Mammary epithelial cell (primary cell): ENCODE measurements at regions of chr12 and their contacts with region 1.

Region 1: DNA sequence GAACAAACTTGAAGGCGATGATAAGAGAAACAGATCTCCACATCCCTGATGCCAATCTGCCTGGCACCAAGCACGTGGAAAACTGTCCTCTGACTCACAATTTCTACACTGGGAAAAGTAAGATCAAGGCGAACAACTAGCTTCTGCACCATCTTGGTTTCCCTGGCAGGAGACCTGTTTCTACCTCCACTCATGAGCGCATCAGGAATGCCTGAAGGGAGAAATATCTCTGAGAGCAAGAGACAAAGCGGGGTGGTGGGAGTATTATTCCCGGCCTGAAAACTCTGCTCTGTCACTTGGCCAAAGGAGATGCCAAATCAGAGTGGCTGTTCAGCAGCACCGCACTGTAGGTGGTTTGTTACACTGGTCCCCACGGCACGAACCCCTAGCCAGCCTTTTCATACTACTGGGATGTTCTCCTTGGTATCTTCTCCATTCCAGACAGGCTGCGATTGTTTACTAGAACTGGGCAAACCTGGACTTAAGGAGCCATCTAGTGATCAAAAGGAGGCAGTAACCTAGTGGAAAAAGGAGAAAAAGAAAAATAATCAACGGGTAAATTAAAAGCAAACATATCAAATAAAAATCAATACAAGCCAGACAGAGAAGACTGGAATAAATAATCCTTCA is 59.0 kb upstream of the TMTC2 start:
- DNase-seq: peak; percentile 30
- H3K4me3 ChIP-seq: no peak overlapping the region
- H3K27ac ChIP-seq: no peak overlapping the region
- H3K4me1 ChIP-seq: no peaks in the 10 kb centered on the region
- H3K27me3 ChIP-seq: no peaks in the 10 kb centered on the region
- CTCF ChIP-seq: peak; percentile 54 to 68

Region 2: DNA sequence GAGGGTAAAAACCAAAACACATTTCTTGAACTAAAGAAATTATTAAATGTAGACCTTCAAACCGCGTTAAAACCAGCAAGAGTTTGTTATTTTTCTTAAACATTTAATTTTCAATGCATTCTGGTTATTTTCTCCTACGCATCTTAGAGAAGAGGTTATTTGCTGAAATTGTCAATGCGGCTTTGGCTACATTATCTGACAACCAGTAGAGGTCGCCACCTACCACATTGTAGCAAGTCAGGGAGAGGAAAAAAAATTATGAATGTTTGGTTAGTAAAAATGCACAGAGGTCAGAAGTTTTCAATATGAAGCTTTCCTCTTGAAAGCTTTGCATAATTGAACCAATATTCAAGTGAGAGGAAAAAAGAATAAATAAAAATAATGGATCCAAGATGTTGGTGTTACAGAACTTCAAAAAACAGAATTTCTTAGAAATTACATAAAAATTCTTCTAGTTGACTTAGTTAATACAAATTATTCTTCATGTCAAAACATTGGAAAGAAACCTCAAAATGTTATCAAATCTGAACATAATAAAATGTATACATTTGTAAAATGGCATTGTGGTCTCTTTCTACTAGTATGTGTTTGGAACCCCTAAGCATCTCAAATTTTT is 100.4 kb before region 1 on chr12:
- CTCF ChIA-PET with region 1: no interaction called
- dilution Hi-C with region 1: no loop called
- in situ Hi-C with region 1: loop called in 1 of 2 experiments (anchors 10 kb)
- intact Hi-C with region 1: loop called (anchors 1 kb)
- DNase-seq: peak; percentile 41
- H3K4me3 ChIP-seq: no peak overlapping the region
- H3K27ac ChIP-seq: no peak overlapping the region
- H3K4me1 ChIP-seq: no peaks in the 10 kb centered on the region
- H3K27me3 ChIP-seq: peaks cover 5% of the 10 kb centered on the region
- CTCF ChIP-seq: peak; percentile 88 to 94